ENCODE measurements at regions of chr2 and their contacts with region 1.

Region 1: DNA sequence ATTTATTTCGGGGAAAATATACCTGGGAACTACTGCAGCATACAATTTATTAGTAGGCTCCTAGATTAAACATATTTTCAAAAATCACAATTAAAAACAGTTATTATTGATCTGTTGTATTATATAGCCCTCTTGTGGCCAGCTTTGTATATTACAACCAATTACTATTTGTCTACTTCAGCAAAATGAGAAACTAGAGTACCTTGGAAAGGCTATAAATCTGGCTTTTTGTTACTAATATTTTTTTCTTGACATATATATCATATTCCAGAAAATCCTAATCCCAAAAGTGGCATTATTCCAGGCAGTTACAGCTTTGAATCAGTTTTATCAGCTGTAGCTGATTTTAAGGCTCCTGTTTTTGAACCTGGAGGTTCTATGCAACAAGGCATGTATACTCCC is 101.2 kb downstream of the UBR3 start:
- DNase-seq: no peak
- ATAC-seq: no peak

Region 2: DNA sequence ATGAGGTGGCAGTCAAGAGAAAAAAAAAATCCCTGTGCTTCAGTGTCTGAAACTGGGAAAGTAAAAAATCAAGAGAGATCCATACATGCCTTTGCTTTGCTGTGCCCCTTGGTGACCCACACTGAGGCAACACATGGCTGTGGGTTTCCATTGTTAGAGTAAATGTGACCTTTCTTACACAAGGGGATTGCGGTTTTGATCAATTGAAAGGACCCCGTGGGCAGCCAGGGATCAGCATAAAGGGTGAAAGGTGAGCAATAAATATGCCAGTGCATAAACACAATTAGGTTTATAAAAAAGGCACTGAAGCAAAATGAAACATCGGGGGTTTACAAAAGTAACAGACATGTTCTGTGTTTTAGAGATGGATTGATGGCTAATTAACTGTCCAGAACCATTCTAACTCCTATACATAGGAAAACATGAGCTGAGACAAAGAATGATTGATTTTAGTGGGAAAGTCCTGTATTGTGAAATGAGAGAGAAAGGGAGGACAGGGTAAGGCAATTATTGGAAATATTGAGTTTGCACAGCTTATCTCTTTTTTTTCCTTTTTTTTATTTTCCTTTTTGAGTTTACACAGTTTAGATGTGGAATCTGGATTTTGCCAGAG is 489.9 kb before region 1 on chr2:
- intact Hi-C with region 1: no loop called
- DNase-seq: no peak
- ATAC-seq: no peak

Region 3: DNA sequence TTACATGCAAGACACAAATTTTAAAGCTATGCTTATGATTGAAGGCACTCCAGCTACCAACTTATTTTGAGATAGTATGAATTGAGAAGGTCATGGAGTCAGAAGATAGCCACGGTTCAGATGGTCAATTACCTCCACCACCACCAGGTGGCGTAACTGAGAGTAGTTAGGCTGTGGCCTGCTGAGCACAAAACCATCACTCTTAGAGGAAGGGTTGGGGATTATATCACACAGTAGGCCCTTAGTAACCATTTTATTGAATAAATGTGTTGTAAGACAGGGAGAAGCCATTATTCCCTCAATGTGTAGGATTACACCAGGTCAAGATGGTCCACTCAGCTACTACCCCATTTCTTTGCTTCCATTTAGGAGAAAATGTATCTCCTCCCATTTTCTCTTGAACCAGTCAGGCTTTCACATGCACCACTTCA is 400.2 kb before region 1 on chr2:
- intact Hi-C with region 1: loop called in 1 of 2 experiments (anchors 10 kb)
- DNase-seq: peak; percentile 31 to 80
- ATAC-seq: peak; percentile 77

Region 4: GRCh38 chr2:169824373-169825333 is 103.8 kb before region 1 on chr2 and contains the start of gene METTL5:
- intact Hi-C with region 1: loop called in 1 of 2 experiments (anchors 10 kb)
- DNase-seq: peak; percentile 70 to 85
- ATAC-seq: peak; percentile 75
- total RNA-seq, gene METTL5: 42.2 to 44.7 TPM